ENCODE measurements at regions of chr3 and their contacts with region 1.

Region 1: DNA sequence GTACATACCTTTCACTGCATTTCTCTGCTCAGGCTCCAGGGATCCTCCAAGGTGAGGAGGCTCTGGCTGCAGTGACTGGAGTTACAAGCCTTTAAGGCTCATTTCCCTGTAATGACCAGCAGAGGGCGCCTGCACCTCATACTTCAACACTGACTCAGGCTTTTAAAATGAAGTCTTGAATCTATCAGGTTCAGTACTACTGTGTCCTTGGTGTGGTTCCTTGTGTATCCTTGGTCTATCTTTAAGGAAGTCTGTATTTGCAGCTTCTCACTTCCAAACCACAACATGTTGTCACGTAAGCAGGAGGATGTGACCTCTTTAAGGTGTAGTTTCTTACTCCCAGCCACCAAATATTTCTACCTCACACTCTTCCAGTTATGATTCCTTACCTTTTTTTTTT is 122.5 kb upstream of the ZBED2 start:
- DNase-seq: peak; percentile 73
- CTCF ChIP-seq: peak; percentile 91

Region 2: DNA sequence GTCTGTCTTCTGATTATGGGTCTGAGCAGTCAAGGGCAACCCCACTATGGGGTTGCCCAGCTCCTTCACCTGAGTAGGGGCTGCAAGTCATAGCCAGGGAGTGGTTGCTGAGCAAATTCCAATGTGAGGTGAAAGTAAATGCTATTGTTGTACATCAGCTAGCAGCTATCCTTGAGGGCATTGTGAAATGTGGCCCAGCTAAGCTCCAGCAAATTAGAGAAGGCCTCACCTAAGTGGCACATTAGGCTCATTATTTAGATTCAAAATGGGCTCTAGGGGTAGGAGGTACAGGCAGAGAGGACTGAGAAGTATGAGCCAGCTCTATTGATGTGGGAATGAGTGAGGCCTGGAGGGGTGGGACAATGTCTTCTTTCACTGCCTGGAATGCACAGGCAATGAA is 277.4 kb before region 1 on chr3:
- CTCF ChIA-PET with region 1: no interaction called
- POLR2A ChIA-PET with region 1: no interaction called
- DNase-seq: no peak
- CTCF ChIP-seq: no peak

Region 3: DNA sequence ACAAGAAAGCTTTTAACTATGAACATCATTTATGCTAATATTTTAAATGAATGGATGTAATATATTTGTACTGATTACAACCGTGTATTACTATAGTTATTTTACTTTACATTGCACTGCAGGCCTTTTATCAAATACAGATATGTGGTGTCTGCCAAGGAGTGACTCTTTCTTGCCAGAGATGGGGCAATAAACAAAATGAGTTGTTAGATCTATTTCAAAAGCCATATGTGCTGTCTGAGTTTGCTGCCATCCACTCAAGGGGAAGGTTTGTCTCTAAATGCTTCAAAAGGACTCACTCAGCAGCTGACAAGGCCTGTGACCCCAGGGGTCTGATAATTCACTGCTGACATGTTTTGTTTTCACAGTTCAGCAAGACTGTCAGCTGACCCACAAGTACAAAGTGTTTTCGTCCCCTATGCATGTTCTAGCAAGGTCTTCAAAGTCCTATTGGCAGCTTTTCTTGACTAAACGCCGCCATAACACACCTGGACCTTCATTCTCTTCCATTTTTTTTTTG is 81.2 kb before region 1 on chr3:
- CTCF ChIA-PET with region 1: no interaction called
- POLR2A ChIA-PET with region 1: no interaction called
- DNase-seq: no peak
- CTCF ChIP-seq: no peak

Region 4: DNA sequence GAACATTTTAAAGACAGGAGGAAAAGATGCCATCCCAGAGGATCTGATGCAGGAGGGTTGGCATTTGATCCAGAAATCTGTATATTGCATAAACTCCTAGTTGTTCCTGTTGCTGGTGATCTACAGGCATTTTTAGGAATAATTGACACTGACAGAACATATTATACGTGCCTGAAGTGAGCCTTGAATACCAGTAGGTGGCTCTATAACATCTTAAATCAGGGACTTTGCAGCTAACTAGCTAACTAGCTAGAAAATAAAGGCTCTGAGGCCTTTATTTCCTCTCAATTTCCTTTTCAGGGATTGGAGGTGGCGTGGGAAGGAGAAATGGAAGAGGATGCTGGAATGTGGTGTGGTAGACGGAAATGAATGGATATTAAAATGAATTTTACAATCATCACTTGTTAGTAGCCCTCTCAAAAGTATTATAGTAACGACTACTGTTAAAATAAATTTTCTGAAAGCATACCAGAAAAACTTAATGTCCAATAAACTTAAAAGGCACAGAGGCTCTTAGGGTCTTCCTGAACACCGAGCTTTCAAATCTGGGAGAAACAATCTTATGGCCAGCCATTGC is 48.6 kb before region 1 on chr3:
- CTCF ChIA-PET with region 1: interaction called, 13 read pairs
- POLR2A ChIA-PET with region 1: no interaction called
- DNase-seq: peak; percentile 29
- CTCF ChIP-seq: peak; percentile 73

Region 5: DNA sequence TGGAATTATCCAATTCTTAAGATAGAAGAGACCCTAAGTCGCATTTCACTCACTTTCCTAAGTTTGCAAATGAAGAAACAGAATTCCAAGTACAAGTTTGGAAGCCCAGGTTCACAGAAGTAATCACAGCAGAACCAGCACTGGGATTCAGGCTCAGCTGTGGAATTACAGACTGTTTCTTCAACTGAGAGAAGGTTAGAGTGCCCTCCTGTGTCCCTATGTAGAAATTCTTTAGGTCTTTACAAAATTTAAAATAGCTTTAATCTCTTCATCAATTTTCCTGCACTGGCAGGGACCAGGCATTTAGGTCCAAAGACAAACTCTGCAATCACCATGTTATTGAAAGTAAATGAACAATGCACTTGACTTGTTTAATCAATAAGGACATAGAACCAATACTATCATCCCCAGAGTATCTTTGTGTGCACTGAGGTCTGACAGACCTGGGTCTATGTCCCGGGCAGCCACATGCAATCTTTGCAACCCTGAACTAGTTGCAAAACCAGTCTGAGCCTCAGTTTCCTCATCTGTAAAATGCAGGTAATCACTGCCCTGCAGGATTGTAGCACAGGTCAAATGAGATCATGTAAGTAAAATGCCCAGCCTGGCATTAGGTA is 26.2 kb before region 1 on chr3:
- CTCF ChIA-PET with region 1: interaction called, 53 read pairs
- POLR2A ChIA-PET with region 1: no interaction called
- DNase-seq: peak; percentile 28
- CTCF ChIP-seq: peak; percentile 40

Region 6: DNA sequence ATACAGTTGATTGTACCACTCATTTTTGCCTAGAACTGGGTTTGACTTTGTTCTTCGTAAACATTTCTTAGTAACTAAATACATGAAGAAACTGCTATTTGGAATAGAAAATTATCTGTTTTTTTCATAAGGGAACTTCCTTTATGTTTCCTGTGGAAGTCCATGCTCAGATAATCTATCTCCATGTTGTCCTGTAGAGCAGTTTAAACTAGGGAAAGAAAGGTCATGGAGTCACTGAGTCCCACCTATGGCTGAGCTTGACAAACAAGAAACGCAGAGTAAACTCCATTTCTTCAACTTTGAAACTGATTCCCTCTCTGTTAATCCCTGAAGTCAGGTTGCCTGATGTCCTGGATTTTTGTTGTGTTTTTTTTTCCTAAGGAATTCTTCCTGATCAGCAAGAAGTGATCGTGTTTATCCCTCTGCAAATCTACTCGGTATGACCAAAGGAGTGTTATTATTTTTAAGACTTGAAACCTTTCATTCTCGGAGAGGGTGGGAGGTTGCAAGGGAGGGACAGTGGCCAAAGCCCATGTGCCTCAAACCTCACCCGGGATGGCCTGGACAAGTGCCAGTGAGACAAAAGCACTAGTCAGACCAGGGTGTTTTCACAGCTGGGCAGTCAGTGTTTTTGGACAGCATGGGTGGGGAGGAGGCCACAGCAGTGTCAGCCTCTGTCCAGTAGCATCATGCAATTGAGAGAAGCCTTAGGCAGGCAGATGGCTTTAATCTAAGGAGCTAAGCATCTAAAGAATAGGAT is 11.7 kb after region 1 on chr3:
- CTCF ChIA-PET with region 1: interaction called, 17 read pairs
- POLR2A ChIA-PET with region 1: no interaction called
- DNase-seq: no peak
- CTCF ChIP-seq: no peak

Region 7: DNA sequence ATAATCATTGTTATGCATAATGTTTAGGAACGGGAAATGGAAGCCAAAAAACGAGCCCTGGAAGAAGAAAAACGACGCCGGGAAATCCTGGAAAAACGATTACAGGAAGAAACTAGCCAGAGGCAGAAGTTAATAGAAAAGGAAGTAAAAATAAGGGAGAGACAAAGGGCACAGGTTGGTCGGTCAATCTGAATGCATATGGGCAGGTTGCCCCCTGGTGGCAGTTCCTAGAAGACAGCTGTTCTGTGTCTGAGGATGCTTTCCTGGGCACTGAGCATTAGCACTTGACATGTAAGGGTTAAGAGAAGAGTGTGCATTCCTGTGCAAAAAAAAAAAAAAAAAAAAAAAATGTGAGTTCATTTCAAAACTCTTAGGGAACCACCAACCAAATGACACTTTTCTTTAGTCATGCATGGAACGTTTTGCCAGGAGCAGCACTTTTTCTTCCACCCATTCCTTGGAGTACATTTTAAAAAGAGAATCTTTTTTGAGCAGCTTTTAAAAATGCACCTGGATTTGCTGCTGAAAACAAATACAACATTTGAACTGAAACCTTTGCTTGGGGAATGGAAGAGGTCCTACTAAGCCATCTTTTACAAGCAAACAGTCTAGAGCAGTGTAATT is 250.2 kb after region 1 on chr3:
- CTCF ChIA-PET with region 1: interaction called, 327 read pairs
- POLR2A ChIA-PET with region 1: interaction called, 3 read pairs
- DNase-seq: peak; percentile 38
- CTCF ChIP-seq: peak; percentile 86

Region 8: DNA sequence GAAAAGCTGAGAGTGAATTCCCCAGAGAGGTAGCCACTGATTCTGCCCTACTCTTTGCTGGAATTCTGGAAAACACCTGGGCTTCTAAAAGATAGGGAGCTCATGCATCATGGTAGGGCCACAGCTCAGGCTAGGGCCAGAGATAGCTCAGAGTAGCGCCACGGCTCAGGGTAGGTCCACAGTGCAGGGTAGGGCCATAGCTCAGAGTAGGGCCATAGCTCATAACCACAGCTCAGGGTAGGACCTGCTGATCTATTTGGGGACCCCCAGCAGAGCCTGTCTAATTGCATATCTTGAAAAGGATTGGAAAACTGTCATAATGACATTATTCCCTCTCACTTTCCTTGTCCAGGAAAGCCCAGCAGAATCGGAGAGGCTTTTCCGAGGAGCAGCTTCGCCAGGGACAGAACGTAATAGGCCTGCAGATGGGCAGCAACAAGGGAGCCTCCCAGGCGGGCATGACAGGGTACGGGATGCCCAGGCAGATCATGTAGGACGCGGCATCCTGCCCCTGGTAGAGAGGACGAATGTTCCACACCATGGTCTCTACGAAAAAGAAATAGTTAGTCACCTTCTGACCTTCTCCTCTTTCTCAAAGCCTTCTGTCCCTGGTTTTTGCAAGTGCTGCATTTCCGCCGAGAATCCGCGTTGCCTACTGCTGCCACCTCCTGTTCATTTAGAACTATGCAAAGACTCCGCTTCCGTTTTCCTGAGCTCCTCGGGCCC is 295.6 kb after region 1 on chr3:
- CTCF ChIA-PET with region 1: interaction called, 124 read pairs
- POLR2A ChIA-PET with region 1: no interaction called
- DNase-seq: peak; percentile 66
- CTCF ChIP-seq: peak; percentile 76

Measured in GM10248 (cell line).